ENCODE measurements at regions of chr16 and their contacts with region 1.

Region 1: GRCh38 chr16:82229796-82230619 is 60.0 kb upstream of the MPHOSPH6 start:
- DNase-seq: peak; percentile 70
- H3K4me3 Mint-ChIP-seq: no peak overlapping the region
- H3K27ac Mint-ChIP-seq: no peak overlapping the region
- H3K4me1 Mint-ChIP-seq: no peaks in the 10 kb centered on the region
- H3K27me3 Mint-ChIP-seq: peaks cover 10% of the 10 kb centered on the region

Region 2: DNA sequence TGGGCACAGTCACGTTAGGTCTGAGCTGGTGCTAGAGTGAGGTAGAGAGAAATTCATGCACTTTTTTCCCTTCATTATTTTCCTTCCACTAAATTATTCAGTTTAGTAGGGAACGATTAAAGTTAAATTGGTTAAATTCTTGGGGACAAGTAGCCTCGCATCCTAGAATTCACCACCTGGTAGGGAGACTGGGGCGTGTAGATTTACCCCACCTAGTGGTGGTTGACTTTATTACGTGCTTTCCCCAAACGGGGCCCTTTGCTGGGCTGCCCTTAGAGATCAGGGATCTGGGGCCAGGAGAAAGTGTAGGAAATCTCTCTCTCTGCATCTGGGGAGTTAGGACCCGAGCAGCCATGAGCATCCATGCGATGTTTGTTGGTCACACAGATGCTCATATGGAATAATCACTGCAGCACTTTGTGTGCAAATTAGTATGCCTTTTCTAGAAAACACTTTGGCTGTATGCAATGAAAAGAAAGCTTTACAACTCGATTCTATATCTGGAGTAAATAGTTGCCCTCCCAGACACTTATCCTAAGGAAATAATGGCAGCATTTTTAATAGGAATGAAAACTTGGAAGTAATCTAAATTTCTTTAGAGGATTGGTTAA is 343.9 kb before region 1 on chr16:
- CTCF ChIA-PET with region 1: interaction called, 88 read pairs
- POLR2A ChIA-PET with region 1: no interaction called
- intact Hi-C with region 1: loop called (anchors 1 kb)
- DNase-seq: peak; percentile 35
- H3K4me3 Mint-ChIP-seq: no peak overlapping the region
- H3K27ac Mint-ChIP-seq: no peak overlapping the region
- H3K4me1 Mint-ChIP-seq: no peaks in the 10 kb centered on the region
- H3K27me3 Mint-ChIP-seq: no peaks in the 10 kb centered on the region

Region 3: DNA sequence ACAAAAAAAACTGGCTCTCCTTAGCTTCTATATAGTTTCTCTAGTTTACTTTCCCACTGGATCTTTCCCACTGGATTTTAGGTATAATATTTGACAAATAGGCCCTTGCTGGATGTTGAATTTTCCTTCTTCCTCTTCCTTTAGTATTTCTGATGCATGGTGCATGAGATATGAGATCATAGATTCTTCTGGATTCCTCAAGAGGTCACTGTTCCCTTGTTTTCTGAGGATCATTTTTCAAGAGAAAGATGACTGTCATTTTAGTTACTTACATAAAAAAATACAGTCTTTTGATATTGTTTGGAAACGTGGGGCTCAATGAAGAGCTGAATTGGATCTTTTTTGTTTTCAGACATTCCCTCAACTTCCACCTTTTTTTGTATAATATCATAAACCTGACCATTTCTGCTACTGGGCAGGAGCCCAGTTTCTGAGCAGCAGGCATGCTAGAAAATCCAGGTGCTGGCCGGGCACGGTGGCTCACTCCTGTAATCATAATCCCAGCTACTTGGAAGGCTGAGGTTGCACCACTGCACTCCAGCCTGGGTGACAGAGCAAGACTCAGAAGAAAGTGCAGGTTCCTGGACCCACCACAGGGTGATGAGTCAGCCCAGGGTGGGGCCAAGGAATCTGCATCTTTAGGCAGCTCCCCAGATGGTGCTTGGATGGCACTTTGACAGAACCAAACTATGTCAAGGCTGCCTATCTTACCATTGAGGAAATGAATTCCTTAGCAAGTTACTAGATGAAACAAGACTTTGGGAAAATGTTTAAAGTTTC is 289.0 kb before region 1 on chr16:
- CTCF ChIA-PET with region 1: interaction called, 49 read pairs
- POLR2A ChIA-PET with region 1: no interaction called
- intact Hi-C with region 1: loop called (anchors 1 kb)
- DNase-seq: peak; percentile 18
- H3K4me3 Mint-ChIP-seq: no peak overlapping the region
- H3K27ac Mint-ChIP-seq: no peak overlapping the region
- H3K4me1 Mint-ChIP-seq: no peaks in the 10 kb centered on the region
- H3K27me3 Mint-ChIP-seq: no peaks in the 10 kb centered on the region

Region 4: GRCh38 chr16:82061861-82062525 is 168.0 kb before region 1 on chr16:
- CTCF ChIA-PET with region 1: interaction called, 11 read pairs
- POLR2A ChIA-PET with region 1: no interaction called
- intact Hi-C with region 1: no loop called
- DNase-seq: no peak
- H3K4me3 Mint-ChIP-seq: no peak overlapping the region
- H3K27ac Mint-ChIP-seq: no peak overlapping the region
- H3K4me1 Mint-ChIP-seq: no peaks in the 10 kb centered on the region
- H3K27me3 Mint-ChIP-seq: peaks cover 15% of the 10 kb centered on the region

Region 5: GRCh38 chr16:82082543-82083244 is 147.3 kb before region 1 on chr16:
- CTCF ChIA-PET with region 1: no interaction called
- POLR2A ChIA-PET with region 1: no interaction called
- intact Hi-C with region 1: loop called (anchors 10 kb)
- DNase-seq: peak; percentile 10
- H3K4me3 Mint-ChIP-seq: no peak overlapping the region
- H3K27ac Mint-ChIP-seq: no peak overlapping the region
- H3K4me1 Mint-ChIP-seq: peaks cover 4% of the 10 kb centered on the region
- H3K27me3 Mint-ChIP-seq: peaks cover 21% of the 10 kb centered on the region

Region 6: GRCh38 chr16:82169861-82170845 is 59.9 kb before region 1 on chr16 and contains the start of gene MPHOSPH6:
- CTCF ChIA-PET with region 1: interaction called, 10 read pairs
- POLR2A ChIA-PET with region 1: interaction called, 4 read pairs
- intact Hi-C with region 1: loop called (anchors 5 kb)
- DNase-seq: peak; percentile 93
- H3K4me3 Mint-ChIP-seq: peak within 1 kb of the TSS; percentile 96
- H3K27ac Mint-ChIP-seq: peak within 1 kb of the TSS; percentile 90
- H3K4me1 Mint-ChIP-seq: peaks cover 19% of the 10 kb centered on the region
- H3K27me3 Mint-ChIP-seq: peaks cover 14% of the 10 kb centered on the region
- total RNA-seq, gene MPHOSPH6: 36.0 to 37.0 TPM

Region 7: GRCh38 chr16:82240111-82240510 is 10.1 kb after region 1 on chr16:
- CTCF ChIA-PET with region 1: interaction called, 12 read pairs
- POLR2A ChIA-PET with region 1: no interaction called
- intact Hi-C with region 1: no loop called
- DNase-seq: no peak
- H3K4me3 Mint-ChIP-seq: no peak overlapping the region
- H3K27ac Mint-ChIP-seq: no peak overlapping the region
- H3K4me1 Mint-ChIP-seq: no peaks in the 10 kb centered on the region
- H3K27me3 Mint-ChIP-seq: peaks cover 17% of the 10 kb centered on the region

Region 8: DNA sequence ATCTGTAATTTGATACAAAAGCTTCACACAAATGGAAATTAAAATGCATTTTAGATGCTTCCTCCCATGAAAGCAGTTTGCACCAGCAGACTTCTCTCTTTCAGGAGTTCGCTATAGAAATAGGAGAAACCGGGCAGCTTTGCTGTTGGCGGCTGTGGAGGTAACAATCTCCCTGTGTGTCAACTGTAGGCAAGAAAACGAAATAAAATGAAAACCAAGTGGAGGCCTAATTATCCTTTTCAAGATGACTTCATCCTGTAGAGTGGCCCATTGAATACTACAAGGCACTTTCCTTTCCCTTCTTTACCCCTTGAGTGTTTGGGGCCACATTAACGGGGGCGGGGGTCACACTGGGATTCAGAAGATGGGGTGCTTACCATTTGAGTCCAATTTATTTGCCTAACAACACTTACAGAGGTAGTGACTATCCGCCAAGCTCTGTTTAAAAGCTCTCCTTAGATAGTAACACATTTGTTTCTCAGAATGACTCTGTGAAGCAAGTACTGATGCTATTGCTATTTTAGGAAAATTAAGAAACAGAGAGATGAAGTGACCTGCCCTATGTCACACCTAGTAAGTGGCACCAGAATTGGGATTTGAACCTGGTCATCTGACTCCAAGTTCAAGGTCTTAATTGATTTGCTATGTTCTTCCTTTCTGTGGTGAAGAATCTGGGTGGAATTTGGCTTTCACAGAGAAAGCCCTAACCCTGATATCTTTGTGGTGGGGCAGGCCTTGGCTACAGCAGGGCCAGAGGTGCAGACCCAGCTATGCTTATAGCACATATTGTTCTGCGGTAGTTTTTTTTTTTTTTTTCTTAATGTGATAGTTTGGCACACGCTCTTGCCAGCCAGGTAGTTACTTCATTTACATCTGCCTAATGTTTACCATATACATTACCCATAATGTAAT is 65.5 kb after region 1 on chr16:
- CTCF ChIA-PET with region 1: no interaction called
- POLR2A ChIA-PET with region 1: no interaction called
- intact Hi-C with region 1: no loop called
- DNase-seq: no peak
- H3K4me3 Mint-ChIP-seq: no peak overlapping the region
- H3K27ac Mint-ChIP-seq: no peak overlapping the region
- H3K4me1 Mint-ChIP-seq: no peaks in the 10 kb centered on the region
- H3K27me3 Mint-ChIP-seq: peaks cover 3% of the 10 kb centered on the region

Measured in activated CD4-positive, alpha-beta memory T cell treated with anti-CD3 and anti-CD28 coated beads for 36 hours (primary cell).